ENCODE measurements at regions of chr9 and their contacts with region 1.

Region 1: DNA sequence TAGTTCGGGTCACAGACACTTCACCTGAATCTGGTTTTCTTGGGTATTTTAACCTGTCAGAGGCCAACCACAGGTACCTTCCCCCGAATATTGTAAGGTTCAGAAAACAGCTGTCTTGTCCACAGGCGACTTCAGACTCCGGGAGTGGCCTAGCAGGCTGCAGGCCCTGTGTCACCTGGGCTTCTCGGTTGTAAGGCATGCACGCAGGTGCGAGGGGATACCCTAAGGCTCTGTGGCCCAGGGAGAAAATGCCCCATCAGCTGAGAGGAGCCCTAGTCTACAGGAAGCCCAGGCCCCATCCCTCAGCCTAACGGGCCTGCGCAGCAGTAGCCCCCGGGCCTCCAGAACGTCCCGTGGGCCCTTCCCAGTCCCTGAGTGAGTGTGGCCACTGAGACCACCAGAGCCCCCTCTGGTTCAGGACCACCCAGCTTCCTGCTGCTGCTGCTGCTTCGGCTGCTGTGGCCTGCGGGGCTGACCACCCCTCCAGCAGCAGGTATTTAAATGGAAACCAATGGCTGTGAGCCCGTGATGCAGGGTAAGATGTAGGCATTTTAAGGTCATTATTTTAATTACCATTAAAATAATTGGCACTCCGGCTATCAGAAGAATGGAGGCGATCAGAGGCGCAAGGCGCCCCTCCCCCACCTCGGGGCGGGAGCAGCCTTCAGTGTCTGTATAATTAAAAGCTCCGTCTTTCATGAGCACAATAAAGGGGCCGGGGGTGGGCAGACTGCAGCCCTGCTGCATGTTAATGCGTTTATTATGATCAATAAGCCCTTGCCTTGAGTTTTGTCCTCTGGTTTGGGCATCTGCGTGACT is 65.4 kb downstream of the PSMB7 start:
- DNase-seq: peak; percentile 23 to 56
- ATAC-seq: no peak
- H3K4me3 ChIP-seq: no peak overlapping the region
- H3K27ac ChIP-seq: no peak overlapping the region
- H3K4me1 ChIP-seq: no peaks in the 10 kb centered on the region
- H3K27me3 ChIP-seq: no peaks in the 10 kb centered on the region

Region 2: GRCh38 chr9:123583646-123584045 is 766.2 kb before region 1 on chr9:
- intact Hi-C with region 1: no loop called
- DNase-seq: no peak
- ATAC-seq: no peak
- H3K4me3 ChIP-seq: no peak overlapping the region
- H3K27ac ChIP-seq: no peak overlapping the region
- H3K4me1 ChIP-seq: no peaks in the 10 kb centered on the region
- H3K27me3 ChIP-seq: no peaks in the 10 kb centered on the region

Region 3: GRCh38 chr9:124008694-124009530 is 341.0 kb before region 1 on chr9:
- intact Hi-C with region 1: no loop called
- DNase-seq: peak in 1 of 2 donors; percentile 73
- ATAC-seq: no peak
- H3K4me3 ChIP-seq: no peak overlapping the region
- H3K27ac ChIP-seq: no peak overlapping the region
- H3K4me1 ChIP-seq: no peaks in the 10 kb centered on the region
- H3K27me3 ChIP-seq: peaks cover 0 to 1% of the 10 kb centered on the region in 2 donors

Region 4: DNA sequence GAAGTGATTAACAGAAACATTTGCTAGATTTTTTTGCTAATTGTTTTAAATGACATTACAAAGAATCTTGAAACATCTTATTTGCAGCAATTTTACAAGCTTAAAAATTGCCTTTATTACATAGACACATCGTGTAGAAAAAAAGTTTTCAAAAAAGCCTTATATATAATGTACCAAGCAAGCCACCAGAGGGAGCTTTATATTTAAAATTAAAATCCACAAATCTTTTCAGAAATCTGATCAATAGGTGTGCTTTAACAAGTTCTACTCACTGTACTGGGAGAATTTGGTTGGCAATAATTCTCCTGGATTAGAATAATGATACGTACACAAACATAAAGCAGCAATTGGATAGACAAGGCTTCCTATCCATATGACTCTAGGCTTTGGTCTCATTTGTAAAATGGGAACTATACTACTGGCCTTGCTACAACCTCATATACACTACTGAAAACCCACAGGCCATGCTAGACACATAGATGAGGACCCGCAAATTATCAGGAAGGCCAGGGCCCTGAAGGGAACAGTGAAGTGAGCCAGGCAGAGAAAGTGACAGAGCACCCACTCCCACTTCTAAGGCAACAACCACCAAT is 60.5 kb after region 1 on chr9:
- intact Hi-C with region 1: loop called in 1 of 2 experiments (anchors 2 kb)
- DNase-seq: no peak
- ATAC-seq: no peak
- H3K4me3 ChIP-seq: no peak overlapping the region
- H3K27ac ChIP-seq: no peak overlapping the region
- H3K4me1 ChIP-seq: peaks cover 0 to 3% of the 10 kb centered on the region in 2 donors
- H3K27me3 ChIP-seq: no peaks in the 10 kb centered on the region

Region 5: GRCh38 chr9:124420991-124421543 is 71.2 kb after region 1 on chr9:
- intact Hi-C with region 1: no loop called
- DNase-seq: no peak
- ATAC-seq: no peak
- H3K4me3 ChIP-seq: no peak overlapping the region
- H3K27ac ChIP-seq: no peak overlapping the region
- H3K4me1 ChIP-seq: no peaks in the 10 kb centered on the region
- H3K27me3 ChIP-seq: no peaks in the 10 kb centered on the region